GM12878 (cell line): ENCODE measurements at regions of chr16 and their contacts with region 1.

Region 1: DNA sequence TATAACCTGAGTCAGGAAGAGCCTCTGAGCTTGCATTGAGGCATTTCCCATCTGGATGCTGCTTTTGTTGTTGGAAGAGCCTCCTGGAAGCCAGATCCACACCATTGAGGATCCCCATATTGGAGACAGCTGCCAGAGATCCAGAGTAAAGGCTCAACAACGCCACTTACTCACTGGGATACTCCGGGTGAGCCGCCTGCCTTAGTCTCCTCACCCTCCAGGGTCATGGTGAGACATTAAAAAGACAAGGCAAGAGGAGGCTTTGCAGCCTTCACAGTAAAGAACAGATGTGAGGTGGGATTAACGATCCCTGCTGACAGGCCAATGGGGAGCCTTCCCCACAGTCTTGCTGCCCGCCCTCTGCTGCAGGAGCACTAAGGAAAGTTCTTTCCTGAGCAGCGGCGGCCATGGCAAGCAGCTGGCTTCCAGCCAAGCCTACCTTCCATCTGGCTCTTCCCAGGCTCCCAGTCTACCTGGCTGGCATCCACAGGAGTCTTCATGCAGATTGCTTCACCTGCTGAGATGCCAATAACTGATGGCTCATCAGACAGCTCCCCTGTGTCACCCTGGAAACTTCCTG is 198.5 kb downstream of the CYLD start:
- DNase-seq: no peak
- ATAC-seq: no peak
- H3K4me3 ChIP-seq: no peak overlapping the region
- H3K27ac ChIP-seq: no peak overlapping the region
- H3K4me1 ChIP-seq: no peaks in the 10 kb centered on the region
- H3K27me3 ChIP-seq: peaks cover 0 to 3% of the 10 kb centered on the region in 2 experiments; a peak in 2 of 4 replicates
- CTCF ChIP-seq: no peak
- EP300 ChIP-seq: no peak
- POLR2A ChIP-seq: no peak
- RAD21 ChIP-seq: no peak

Region 2: GRCh38 chr16:50489182-50489581 is 451.2 kb before region 1 on chr16:
- CTCF ChIA-PET with region 1: no interaction called
- POLR2A ChIA-PET with region 1: no interaction called
- RAD21 ChIA-PET with region 1: no interaction called
- SMC1A ChIA-PET with region 1: no interaction called
- in situ Hi-C with region 1: no loop called
- intact Hi-C with region 1: no loop called
- DNase-seq: no peak
- ATAC-seq: no peak
- H3K4me3 ChIP-seq: no peak overlapping the region
- H3K27ac ChIP-seq: no peak overlapping the region
- H3K4me1 ChIP-seq: no peaks in the 10 kb centered on the region
- H3K27me3 ChIP-seq: no peaks in the 10 kb centered on the region
- CTCF ChIP-seq: no peak
- EP300 ChIP-seq: no peak
- POLR2A ChIP-seq: no peak
- RAD21 ChIP-seq: no peak

Region 3: DNA sequence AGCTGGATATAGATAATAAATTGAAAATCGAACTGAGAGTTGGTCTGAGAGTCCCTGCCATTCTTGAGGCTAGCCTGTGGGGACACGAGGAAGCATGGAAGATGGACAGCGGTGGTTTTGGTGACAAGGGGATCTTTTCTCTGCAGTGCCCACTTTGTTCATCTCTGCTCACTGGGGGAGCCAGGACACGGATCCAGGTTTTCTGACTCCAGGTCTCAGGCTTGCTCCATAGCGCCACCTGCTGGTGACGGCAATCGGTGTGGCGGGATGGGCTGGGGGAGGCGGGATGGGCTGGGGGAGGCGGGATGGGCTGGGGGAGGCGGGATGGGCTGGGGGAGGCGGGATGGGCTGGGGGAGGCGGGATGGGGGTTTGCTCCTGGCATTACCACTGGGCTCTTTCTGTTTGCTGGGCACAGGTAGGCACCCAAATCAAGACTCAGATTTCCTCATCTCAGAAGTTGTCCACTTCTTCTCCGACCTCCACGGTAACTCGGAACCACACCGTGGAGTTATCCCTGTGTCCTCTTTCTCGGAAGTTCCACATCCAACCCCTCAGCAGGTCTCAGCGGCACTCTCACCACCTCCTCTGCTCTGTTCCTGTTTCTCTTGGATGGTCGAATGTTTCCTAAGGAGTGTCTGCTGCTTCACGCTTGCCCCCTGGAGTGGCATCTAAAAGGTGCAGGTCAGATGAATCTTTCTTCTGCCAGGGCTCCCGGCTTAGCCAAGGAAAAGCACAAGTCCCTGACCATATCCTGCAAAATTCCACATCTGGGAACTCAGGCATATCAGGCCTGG is 56.1 kb before region 1 on chr16:
- CTCF ChIA-PET with region 1: no interaction called
- POLR2A ChIA-PET with region 1: interaction called, 3 read pairs
- RAD21 ChIA-PET with region 1: no interaction called
- SMC1A ChIA-PET with region 1: no interaction called
- in situ Hi-C with region 1: no loop called
- intact Hi-C with region 1: loop called (anchors 10 kb)
- DNase-seq: no peak
- ATAC-seq: peak; percentile 52; the same call in 2 of the 3 replicates
- H3K4me3 ChIP-seq: no peak overlapping the region
- H3K27ac ChIP-seq: no peak overlapping the region
- H3K4me1 ChIP-seq: no peaks in the 10 kb centered on the region
- H3K27me3 ChIP-seq: no peaks in the 10 kb centered on the region; a peak in 1 of 4 replicates
- CTCF ChIP-seq: peak; percentile 44 to 69 (median 45); a peak in 5 of 6 replicates
- EP300 ChIP-seq: no peak
- POLR2A ChIP-seq: no peak
- RAD21 ChIP-seq: peak; percentile 31